Esophagus muscularis mucosa (tissue), 4 donors: ENCODE measurements at regions of chr5 and their contacts with region 1.

Region 1: DNA sequence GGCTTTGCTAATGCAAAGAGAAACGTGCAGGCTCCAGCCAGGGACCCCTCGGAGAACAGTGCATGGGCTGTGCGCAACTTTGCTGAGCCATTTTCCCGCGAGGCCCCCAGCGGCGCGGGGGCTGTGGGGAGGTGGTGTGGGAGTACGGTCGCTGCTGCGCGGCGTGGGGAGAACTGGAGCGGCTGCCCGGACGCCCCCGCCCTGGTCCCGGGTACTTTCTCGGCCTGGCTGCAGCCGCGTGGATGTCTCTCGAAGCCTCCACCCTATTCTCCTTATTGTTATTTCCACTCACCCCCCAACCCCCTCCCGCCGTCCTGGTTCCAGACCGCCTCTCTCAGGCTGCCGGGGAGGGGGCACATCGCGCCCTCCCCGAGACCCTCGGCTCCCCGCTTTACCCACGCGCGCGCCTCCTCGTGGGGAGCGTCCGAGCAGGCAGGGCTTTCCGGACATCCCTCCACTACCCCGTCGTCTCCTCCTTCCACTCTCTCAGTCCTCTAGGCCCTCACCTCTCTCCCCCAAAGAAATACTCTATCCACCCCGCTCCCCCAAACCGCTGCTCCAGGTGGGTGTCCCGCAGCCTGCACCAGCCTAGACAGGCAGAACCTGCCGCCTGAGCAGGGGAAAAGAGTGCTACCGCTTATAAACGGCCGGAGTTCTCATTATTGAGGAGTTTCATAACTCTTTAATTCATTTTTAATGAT is 68.6 kb upstream of the TBCA start:
- DNase-seq: peak; percentile 87
- H3K4me3 ChIP-seq: peak overlapping the region; percentile 59 to 64 (median 61)
- H3K27ac ChIP-seq: peak overlapping the region in 3 of 4 donors; percentile 4 to 48 (median 28)
- H3K4me1 ChIP-seq: peaks cover 9 to 17% (median 17%) of the 10 kb centered on the region in 4 donors
- H3K27me3 ChIP-seq: peaks cover 0 to 7% (median 0%) of the 10 kb centered on the region in 4 donors
- CTCF ChIP-seq: peak in 1 of 3 experiments; percentile 37
- EP300 ChIP-seq: no peak
- POLR2A ChIP-seq: no peak

Region 2: DNA sequence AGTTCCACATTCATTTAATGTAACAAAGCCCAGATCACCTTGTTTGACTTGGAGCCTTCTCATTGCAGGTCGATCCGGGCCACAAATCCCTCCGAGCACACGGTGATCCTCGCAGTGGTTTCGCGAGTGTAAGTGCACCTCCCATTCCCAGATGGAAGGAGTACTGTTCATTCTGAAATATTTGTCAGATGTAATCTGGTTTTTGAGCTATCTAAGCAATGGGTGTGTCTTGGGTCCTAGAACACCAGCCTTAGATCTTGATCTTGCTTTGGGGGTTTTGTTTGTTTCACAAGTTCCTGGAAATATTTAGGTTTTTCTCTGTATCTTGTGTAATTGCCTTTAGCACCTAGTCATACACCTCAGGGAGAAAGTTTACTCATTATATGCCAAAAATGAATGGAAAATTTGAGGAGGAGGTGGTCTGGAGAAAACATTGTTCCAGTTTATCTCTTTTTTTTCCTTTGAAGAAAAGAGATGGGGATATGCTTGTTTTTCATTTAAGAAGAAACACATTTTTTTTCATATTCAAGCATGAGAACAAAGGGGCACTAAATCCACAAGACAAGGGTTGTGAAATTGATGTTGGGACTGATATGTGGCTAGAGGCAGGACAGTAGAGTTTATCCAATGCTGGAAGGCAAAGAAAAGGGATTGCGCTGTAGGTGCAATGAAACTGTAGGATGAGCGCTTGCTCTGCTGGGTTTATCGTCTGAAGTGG is 515.7 kb before region 1 on chr5:
- intact Hi-C with region 1: no loop called
- DNase-seq: no peak
- H3K4me3 ChIP-seq: no peak overlapping the region
- H3K27ac ChIP-seq: no peak overlapping the region
- H3K4me1 ChIP-seq: no peaks in the 10 kb centered on the region
- H3K27me3 ChIP-seq: no peaks in the 10 kb centered on the region
- CTCF ChIP-seq: no peak
- EP300 ChIP-seq: no peak
- POLR2A ChIP-seq: no peak

Region 3: GRCh38 chr5:77650686-77651085 is 194.1 kb before region 1 on chr5:
- intact Hi-C with region 1: loop called (anchors 5 kb)
- DNase-seq: peak; percentile 72
- H3K4me3 ChIP-seq: no peak overlapping the region
- H3K27ac ChIP-seq: no peak overlapping the region
- H3K4me1 ChIP-seq: peaks cover 2% of the 10 kb centered on the region in 4 donors
- H3K27me3 ChIP-seq: peaks cover 0 to 39% (median 6%) of the 10 kb centered on the region in 4 donors
- CTCF ChIP-seq: no peak
- EP300 ChIP-seq: no peak
- POLR2A ChIP-seq: no peak

Region 4: GRCh38 chr5:77798456-77798855 is 46.3 kb before region 1 on chr5:
- intact Hi-C with region 1: no loop called
- DNase-seq: no peak
- H3K4me3 ChIP-seq: no peak overlapping the region
- H3K27ac ChIP-seq: no peak overlapping the region
- H3K4me1 ChIP-seq: no peaks in the 10 kb centered on the region
- H3K27me3 ChIP-seq: no peaks in the 10 kb centered on the region
- CTCF ChIP-seq: no peak
- EP300 ChIP-seq: no peak
- POLR2A ChIP-seq: no peak